ENCODE measurements at regions of chr6 and their contacts with region 1.

Region 1: GRCh38 chr6:33585403-33586107 is 5.5 kb upstream of the BAK1 start:
- DNase-seq: no peak
- H3K4me3 ChIP-seq: no peak overlapping the region
- H3K27me3 ChIP-seq: no peaks in the 10 kb centered on the region
- CTCF ChIP-seq: peak; percentile 97

Region 2: GRCh38 chr6:33204378-33205190 is 381.0 kb before region 1 on chr6 and contains the start of gene HSD17B8:
- CTCF ChIA-PET with region 1: no interaction called
- POLR2A ChIA-PET with region 1: no interaction called
- DNase-seq: no peak
- H3K4me3 ChIP-seq: peak within 1 kb of the TSS; percentile 50
- H3K27me3 ChIP-seq: no peaks in the 10 kb centered on the region
- CTCF ChIP-seq: no peak
- polyA plus RNA-seq, gene HSD17B8: 2.1 and 3.4 TPM in 2 replicates

Region 3: GRCh38 chr6:33672808-33673207 is 87.3 kb after region 1 on chr6:
- CTCF ChIA-PET with region 1: interaction called, 16 read pairs
- POLR2A ChIA-PET with region 1: no interaction called
- DNase-seq: peak; percentile 84
- H3K4me3 ChIP-seq: no peak overlapping the region
- H3K27me3 ChIP-seq: no peaks in the 10 kb centered on the region
- CTCF ChIP-seq: peak; percentile 76

Region 4: DNA sequence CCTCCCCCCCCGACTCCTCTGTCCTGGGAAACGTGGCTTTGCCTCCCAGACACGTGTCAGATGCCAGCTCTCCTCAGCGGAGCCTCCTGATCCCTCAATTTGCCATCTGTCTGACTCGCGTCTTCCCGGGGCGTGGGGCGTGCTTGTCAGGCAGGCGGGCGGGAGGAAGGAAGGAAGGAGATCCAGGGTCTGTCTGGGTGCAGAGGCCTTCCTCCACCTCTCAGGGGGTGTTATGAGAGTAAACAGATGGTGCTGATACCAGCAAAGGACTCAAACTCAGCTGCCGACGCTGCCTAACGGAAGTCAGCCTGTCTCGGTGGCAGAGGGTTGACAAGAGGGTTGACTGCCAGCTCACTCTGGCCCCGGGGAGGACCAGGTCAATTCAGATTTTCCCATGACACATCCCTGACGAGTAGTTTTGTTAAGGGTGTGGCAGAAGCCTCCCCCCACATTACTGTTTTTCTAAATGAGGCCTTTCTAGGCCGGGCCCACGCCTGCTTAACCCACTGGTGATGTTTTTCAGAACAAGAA is 108.9 kb after region 1 on chr6:
- CTCF ChIA-PET with region 1: interaction called, 15 read pairs
- POLR2A ChIA-PET with region 1: no interaction called
- DNase-seq: no peak
- H3K4me3 ChIP-seq: no peak overlapping the region
- H3K27me3 ChIP-seq: no peaks in the 10 kb centered on the region
- CTCF ChIP-seq: no peak

Region 5: GRCh38 chr6:33711140-33712129 is 125.9 kb after region 1 on chr6 and contains the start of gene UQCC2:
- CTCF ChIA-PET with region 1: interaction called, 335 read pairs
- POLR2A ChIA-PET with region 1: no interaction called
- DNase-seq: peak; percentile 76
- H3K4me3 ChIP-seq: peak within 1 kb of the TSS; percentile 95
- H3K27me3 ChIP-seq: no peaks in the 10 kb centered on the region
- CTCF ChIP-seq: peak; percentile 81
- polyA plus RNA-seq, gene UQCC2: 51.7 and 66.5 TPM in 2 replicates

Region 6: DNA sequence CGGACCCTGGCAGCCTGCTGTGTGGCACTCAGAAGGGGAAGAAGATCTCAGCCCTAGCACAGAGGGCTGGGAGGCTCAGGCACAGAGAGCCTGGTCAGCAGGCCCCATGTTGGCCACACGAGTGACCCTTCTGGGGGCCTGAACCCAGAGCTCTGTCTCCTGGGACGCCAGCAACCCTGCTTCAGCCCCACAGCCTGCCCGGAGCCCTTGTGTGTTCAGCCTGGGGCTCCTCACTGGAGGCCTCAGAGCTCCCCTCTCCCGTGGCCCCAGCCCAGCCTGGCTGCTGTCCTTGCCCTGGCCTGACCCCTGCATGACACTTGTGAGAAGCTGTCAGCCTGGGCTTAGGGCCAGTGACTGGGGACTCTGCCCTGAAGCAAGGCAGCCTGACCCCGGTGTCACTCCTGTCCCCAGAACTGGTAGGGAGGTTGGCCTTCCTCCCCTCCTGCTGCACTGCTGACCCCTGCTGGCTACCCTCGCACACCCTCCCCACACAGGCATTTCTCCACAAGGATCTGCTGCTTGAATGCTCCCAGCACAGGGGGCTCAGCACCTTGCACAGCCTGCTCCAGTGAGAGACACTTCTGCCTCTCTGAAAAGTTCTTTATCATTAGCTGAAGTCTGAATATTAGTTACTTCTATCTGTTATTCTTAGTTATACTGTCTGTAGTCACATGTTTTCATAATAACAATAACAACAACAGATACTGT is 176.5 kb after region 1 on chr6:
- CTCF ChIA-PET with region 1: interaction called, 24 read pairs
- POLR2A ChIA-PET with region 1: no interaction called
- DNase-seq: no peak
- H3K4me3 ChIP-seq: no peak overlapping the region
- H3K27me3 ChIP-seq: no peaks in the 10 kb centered on the region
- CTCF ChIP-seq: peak; percentile 85